ENCODE measurements at regions of chr20 and their contacts with region 1.

Region 1: DNA sequence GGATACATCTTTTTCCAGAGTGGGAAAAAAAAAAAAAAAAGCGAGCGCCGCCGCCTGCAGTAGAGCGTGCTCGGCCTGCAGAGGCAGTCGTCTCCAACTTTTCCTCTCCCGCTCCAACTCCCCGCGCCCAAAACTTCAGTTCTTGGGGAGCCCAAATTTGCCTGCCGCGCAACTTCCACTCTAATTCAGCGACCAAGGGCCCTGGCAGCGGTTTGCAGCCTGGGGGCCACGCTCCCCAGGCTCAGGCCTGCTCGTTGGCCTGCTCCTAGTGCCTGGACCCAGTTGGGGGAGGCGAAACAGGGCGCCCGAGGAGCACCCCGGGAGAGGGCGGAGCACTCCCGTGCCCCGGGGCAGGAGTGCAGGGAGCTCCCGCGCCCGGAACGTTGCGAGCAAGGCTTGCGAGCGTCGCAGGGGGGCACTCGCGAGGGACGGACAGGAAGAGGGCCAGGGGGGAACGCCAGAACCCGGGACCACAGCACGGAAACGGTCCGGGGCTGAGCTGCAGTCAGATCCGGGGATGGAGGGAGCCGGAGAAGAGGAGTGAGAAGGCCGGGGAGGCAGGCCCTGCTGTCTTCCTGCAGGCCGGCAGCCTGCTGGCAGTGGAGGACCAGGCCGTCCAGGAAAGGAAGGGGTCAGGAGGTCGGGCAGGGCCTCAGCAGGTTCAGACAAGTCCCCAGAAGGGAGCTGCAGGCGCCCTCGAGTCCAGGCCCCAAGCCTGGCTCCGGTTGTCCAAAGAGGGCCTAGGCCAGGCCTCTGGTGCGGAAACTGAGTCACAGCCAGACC is at the start of gene STX16:
- DNase-seq: peak; percentile 95
- H3K4me3 Mint-ChIP-seq: peak within 1 kb of the TSS; percentile 99
- H3K27ac Mint-ChIP-seq: peak within 1 kb of the TSS; percentile 99
- H3K4me1 Mint-ChIP-seq: peaks cover 20% of the 10 kb centered on the region
- H3K27me3 Mint-ChIP-seq: no peaks in the 10 kb centered on the region
- total RNA-seq, gene STX16: 106 and 110 TPM in 2 replicates

Region 2: DNA sequence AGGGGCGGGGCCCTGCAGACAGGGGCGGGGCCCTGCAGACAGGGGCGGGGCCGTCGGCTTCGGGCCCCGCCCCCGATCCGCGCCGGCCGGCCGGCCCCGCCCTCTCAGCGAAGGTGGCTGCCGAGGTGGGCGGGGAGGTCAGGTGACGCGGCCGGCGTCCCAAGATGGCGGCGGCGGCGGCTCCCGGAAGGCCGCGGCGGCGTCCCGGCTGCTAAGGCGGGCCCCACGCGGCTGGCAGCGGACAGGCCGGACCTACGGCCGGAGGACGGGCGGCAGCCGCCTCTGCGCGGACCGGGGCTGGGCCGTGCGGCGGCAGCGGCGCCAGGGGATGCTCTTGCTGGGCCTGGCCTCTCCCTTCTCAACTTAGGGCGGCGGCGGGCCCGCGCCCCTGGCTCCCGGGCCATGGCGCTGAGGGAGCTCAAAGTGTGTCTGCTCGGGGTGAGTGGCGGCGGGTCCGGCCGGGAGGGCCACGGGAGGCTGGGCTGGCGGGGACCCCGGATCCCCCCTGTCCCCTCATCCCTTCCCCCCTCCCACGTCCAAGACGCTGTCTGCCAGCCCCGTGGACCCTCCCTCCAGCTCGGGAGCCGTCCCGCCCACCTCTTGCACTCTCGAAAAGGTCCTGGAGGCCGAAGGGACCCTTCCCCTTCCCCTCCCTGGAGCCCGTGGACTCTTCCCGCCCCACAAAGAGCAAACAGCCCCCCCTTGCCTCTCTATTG is 341.2 kb before region 1 on chr20 and contains the start of gene RAB22A:
- intact Hi-C with region 1: loop called (anchors 1 kb)
- DNase-seq: peak; percentile 95
- H3K4me3 Mint-ChIP-seq: peak within 1 kb of the TSS; percentile 97
- H3K27ac Mint-ChIP-seq: peak within 1 kb of the TSS; percentile 94
- H3K4me1 Mint-ChIP-seq: peaks cover 50% of the 10 kb centered on the region
- H3K27me3 Mint-ChIP-seq: no peaks in the 10 kb centered on the region
- total RNA-seq, gene RAB22A: 16.5 and 17.4 TPM in 2 replicates

Region 3: DNA sequence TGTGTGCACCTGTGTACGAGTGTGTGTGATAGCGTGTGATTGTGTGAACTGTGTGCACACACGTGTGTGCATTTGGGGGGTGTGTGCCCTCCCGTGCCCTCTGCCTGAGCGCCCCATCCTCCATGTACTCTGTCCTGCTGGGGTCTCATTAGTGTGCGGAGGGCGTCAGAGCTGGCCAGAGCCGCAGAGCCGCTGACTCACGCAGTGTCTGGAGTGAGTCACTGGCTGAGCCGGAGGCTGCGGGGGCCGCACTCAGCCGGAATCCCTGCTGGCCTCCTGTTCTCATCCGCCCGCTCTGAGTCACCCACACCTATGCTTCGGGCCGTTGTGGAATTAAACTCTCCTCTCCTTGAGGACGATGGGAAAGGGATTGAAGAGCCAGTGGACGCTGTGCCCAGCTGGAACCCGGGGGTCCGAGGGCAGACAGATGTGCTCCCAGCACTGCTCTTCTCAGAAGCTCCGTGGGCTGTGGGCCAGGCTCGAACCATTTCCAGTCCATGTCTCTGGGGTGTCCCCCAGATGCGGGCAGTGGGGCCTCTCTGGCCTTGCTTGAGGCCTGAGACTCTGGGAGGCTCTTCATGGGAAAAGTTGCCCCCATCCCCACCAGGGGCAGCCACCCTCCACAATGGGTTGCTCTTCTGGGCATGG is 27.0 kb before region 1 on chr20:
- intact Hi-C with region 1: no loop called
- DNase-seq: no peak
- H3K4me3 Mint-ChIP-seq: no peak overlapping the region
- H3K27ac Mint-ChIP-seq: no peak overlapping the region
- H3K4me1 Mint-ChIP-seq: no peaks in the 10 kb centered on the region
- H3K27me3 Mint-ChIP-seq: peaks cover 2% of the 10 kb centered on the region

Region 4: DNA sequence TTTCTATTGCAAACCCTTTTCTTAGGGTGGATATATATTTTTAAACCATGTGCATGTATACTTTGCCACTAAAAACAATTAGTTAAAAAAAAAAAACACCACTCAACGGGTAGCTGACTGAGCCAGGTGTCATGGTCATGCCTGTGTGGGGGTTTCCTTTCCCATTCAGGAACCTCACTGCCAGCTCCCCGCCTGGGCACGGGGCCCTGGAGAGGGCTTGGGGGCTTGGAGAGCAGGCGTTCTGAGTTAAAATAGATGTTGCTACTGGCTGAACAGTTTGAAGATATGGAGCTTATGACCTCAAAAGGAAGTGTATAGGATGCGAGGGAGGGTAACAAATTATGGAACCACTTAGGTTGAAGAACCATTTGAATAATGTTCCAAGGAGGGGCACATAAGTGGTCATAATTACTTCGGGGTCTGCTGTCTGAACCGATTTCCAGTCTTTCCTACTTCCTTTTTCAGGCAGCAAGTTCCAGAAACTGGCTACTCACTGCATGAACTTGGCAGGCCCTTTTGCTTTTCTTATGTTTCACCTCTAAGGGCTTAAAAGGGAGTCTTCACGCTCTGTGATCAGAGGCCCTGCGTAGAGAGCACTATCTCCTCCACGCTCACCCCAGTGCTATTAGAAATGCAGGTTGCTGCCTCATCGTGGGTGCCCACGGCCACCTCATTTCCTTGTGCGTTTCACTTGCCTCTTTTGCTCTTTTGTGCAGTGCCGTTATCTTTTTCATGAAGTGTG is 10.1 kb after region 1 on chr20:
- intact Hi-C with region 1: loop called (anchors 1 kb)
- DNase-seq: peak; percentile 82
- H3K4me3 Mint-ChIP-seq: peak overlapping the region; percentile 81
- H3K27ac Mint-ChIP-seq: peak overlapping the region; percentile 99
- H3K4me1 Mint-ChIP-seq: peaks cover 70% of the 10 kb centered on the region
- H3K27me3 Mint-ChIP-seq: no peaks in the 10 kb centered on the region

Region 5: DNA sequence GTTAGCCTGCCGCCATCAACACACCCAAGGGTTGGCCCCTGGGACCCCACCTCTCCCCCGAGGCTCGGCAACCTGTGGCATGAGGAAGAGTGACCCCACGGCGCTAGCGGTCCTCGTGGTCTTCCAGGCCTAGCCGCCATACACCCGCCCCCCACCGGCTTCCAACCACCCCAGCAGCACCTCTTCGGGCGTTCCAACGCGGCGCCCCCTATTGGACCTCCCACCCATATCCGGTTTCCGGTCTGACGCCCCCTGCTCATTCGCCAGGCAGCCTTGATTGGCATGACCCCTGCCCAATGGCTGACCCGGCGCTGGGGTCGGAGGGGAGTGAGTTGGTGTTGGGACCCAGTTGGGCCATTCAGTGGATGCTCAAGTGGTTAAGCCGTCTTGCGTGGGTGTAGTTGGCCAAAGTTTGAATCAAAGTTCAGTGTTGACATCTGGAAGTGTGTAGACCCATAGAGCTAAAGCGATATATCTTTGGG is 199.8 kb after region 1 on chr20 and contains the start of gene GNAS-AS1:
- intact Hi-C with region 1: loop called (anchors 2 kb)
- DNase-seq: peak; percentile 94
- H3K4me3 Mint-ChIP-seq: peak within 1 kb of the TSS; percentile 90
- H3K27ac Mint-ChIP-seq: no peak within 1 kb of the TSS
- H3K4me1 Mint-ChIP-seq: peaks cover 36% of the 10 kb centered on the region
- H3K27me3 Mint-ChIP-seq: peaks cover 57% of the 10 kb centered on the region
- total RNA-seq, gene GNAS-AS1: 0.64 and 1.6 TPM in 2 replicates

Region 6: GRCh38 chr20:59032023-59032712 is 381.2 kb after region 1 on chr20 and contains the start of gene ATP5F1E:
- intact Hi-C with region 1: loop called (anchors 5 kb)
- DNase-seq: peak; percentile 99
- H3K4me3 Mint-ChIP-seq: peak within 1 kb of the TSS; percentile 95
- H3K27ac Mint-ChIP-seq: peak within 1 kb of the TSS; percentile 97
- H3K4me1 Mint-ChIP-seq: peaks cover 56% of the 10 kb centered on the region
- H3K27me3 Mint-ChIP-seq: no peaks in the 10 kb centered on the region
- total RNA-seq, gene ATP5F1E: 69.9 and 70.9 TPM in 2 replicates